ENCODE measurements at regions of chr12 and their contacts with region 1.

Region 1: DNA sequence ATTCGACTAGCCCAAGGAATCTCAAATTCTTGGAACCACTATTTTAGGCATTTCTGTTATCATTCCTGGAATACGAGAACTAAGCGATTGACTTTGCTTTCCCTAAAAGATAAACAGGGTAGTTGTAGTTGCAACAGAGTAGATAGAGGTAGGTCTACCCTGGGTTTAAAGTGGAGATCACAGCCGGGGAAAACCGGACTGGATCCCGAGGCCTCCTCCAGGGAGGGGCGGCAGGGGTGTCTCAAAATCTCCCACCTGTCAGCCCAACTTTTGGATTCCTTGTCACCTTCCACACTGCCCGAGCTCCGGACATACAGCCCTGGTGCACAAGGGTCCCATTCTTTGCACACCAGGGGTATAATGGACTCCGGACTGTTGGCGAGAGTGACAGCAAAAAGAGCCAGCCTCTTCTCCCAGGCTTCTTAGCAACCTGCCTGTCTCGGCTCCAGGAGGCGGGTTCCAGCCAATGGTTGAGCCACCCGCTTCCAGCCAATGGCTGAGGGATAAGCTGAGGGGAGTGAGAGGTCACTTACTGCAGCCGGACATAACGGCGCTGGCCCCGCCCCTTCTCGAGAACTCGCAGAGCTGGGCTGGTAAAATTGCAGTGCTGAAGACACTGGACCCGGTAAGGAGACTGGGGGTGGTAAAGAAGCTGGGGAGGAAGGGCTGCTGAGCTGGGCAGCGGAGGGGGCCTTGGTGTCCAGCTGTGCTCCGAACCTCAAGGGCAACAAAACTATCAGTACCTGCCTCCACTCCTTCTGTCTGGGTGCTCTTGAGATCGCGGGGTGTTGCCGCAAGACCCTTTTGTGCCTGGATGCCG is at the start of gene SUOX:
- DNase-seq: peak; percentile 94 to 95
- H3K4me3 ChIP-seq: peak within 1 kb of the TSS; percentile 70
- H3K27ac ChIP-seq: no peak within 1 kb of the TSS
- H3K4me1 ChIP-seq: peaks cover 9% of the 10 kb centered on the region
- H3K27me3 ChIP-seq: no peaks in the 10 kb centered on the region
- CTCF ChIP-seq: no peak; the same call in 1 of the 2 replicates
- total RNA-seq, gene SUOX: 20.4 and 22.7 TPM in 2 replicates

Region 2: DNA sequence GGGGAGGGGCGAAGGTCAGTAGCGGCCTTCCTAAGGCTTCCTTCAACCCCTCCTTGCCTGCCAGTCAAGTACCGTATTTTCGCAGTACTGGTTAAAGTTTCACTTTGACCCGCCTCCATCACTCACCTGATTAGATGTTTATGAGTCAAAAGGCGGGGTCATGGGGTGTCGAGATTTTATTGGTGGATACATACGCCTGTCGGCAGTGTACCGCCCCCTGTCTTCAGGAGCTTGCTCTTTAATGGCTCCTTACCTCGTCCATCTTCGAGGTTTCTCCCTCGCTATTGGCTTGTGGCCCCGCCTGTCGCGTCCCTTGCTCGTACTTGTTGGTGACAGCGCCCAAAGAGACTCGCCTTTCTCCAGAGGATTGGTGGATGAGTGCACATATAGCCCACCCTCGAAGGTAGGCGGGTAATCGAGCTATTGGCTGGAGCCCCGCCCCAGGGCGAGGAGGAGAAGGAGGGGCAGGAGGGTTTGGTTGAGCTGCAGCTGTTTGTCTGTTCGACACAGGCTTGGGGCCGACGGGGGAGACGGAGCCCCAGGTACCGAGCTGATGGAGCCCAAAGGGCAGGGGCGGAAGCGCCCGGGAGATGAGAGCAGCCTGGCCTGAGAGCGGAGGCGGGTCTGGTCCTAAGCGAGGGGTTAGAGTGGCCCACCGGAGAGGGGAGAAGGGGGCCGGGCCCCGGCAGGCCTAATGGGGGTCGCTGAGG is 23.2 kb before region 1 on chr12 and contains the start of gene RAB5B:
- CTCF ChIA-PET with region 1: interaction called, 10 read pairs
- POLR2A ChIA-PET with region 1: interaction called, 6 read pairs
- intact Hi-C with region 1: no loop called
- DNase-seq: peak; percentile 98 to 100
- H3K4me3 ChIP-seq: peak within 1 kb of the TSS; percentile 93
- H3K27ac ChIP-seq: peak within 1 kb of the TSS; percentile 86
- H3K4me1 ChIP-seq: peaks cover 27% of the 10 kb centered on the region
- H3K27me3 ChIP-seq: no peaks in the 10 kb centered on the region
- CTCF ChIP-seq: peak; percentile 70
- total RNA-seq, gene RAB5B: 98.6 and 122 TPM in 2 replicates

Region 3: DNA sequence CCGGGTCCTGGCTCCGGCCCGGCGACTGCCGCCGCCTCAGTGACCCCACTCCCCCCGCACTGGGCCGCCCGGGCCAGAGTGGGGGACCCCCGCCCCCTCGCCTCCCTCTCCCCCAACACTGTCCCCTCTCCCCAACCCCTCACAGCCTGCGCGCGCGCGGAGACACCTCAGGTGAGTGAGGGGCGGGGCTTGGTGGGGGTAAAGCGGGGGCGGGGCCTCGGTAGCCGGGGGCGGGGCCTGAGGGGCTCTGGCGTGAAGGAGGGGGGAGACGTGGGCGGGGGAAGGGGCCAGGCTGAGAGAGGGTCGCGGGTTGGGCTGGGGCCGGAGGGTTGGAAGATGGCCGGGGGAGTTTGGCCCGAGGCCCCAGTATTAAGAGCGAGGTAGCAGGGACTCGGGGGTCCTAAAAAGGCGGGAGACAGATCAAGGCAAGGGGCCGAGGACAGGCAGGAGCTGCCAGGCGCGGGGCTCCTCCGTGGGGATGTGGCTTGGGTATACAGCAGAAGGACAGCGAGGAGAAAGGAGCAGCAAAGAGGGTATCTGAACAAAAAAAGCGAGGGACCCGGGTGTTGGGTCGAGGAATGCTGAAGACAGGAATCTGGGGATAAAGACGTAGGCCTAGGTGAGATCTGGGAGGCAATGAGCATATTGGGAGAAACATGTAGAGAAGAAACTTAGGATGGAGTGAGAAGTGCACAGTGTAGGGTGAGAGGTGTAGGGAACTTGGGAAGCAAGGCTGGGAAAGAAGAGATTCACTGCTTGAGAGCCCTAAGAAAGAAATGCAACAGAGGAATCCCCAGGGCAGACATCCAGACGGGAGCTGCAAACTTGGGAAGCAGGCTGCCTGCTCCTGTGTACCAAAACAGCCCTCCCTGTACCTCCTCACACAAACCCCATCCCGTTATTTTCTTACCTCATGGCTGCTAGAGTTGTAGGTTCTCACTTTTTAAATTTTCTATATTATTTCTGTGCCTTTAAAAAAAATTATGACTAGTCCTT is 10.9 kb after region 1 on chr12:
- CTCF ChIA-PET with region 1: interaction called, 6 read pairs
- POLR2A ChIA-PET with region 1: interaction called, 14 read pairs
- intact Hi-C with region 1: no loop called
- DNase-seq: peak in 1 of 2 experiments; percentile 65
- H3K4me3 ChIP-seq: peak overlapping the region; percentile 63
- H3K27ac ChIP-seq: peak overlapping the region; percentile 52; the same call in 1 of the 2 replicates
- H3K4me1 ChIP-seq: peaks cover 13% of the 10 kb centered on the region
- H3K27me3 ChIP-seq: no peaks in the 10 kb centered on the region
- CTCF ChIP-seq: no peak

Region 4: GRCh38 chr12:56078990-56079664 is 82.2 kb after region 1 on chr12:
- CTCF ChIA-PET with region 1: interaction called, 20 read pairs
- POLR2A ChIA-PET with region 1: interaction called, 3 read pairs
- intact Hi-C with region 1: no loop called
- DNase-seq: peak; percentile 74 to 91
- H3K4me3 ChIP-seq: peak overlapping the region; percentile 69
- H3K27ac ChIP-seq: peak overlapping the region; percentile 86
- H3K4me1 ChIP-seq: peaks cover 26% of the 10 kb centered on the region
- H3K27me3 ChIP-seq: no peaks in the 10 kb centered on the region
- CTCF ChIP-seq: peak; percentile 74

Region 5: GRCh38 chr12:56189176-56189917 is 192.4 kb after region 1 on chr12 and contains the start of gene SMARCC2:
- CTCF ChIA-PET with region 1: no interaction called
- POLR2A ChIA-PET with region 1: no interaction called
- intact Hi-C with region 1: loop called (anchors 2 kb)
- DNase-seq: peak; percentile 71 to 91
- H3K4me3 ChIP-seq: peak within 1 kb of the TSS; percentile 99
- H3K27ac ChIP-seq: peak within 1 kb of the TSS; percentile 85
- H3K4me1 ChIP-seq: peaks cover 28% of the 10 kb centered on the region
- H3K27me3 ChIP-seq: no peaks in the 10 kb centered on the region
- CTCF ChIP-seq: peak; percentile 68
- total RNA-seq, gene SMARCC2: 70.3 and 86.4 TPM in 2 replicates

Measured in PC-9 (cell line).